ENCODE measurements at regions of chr17 and their contacts with region 1.

Region 1: DNA sequence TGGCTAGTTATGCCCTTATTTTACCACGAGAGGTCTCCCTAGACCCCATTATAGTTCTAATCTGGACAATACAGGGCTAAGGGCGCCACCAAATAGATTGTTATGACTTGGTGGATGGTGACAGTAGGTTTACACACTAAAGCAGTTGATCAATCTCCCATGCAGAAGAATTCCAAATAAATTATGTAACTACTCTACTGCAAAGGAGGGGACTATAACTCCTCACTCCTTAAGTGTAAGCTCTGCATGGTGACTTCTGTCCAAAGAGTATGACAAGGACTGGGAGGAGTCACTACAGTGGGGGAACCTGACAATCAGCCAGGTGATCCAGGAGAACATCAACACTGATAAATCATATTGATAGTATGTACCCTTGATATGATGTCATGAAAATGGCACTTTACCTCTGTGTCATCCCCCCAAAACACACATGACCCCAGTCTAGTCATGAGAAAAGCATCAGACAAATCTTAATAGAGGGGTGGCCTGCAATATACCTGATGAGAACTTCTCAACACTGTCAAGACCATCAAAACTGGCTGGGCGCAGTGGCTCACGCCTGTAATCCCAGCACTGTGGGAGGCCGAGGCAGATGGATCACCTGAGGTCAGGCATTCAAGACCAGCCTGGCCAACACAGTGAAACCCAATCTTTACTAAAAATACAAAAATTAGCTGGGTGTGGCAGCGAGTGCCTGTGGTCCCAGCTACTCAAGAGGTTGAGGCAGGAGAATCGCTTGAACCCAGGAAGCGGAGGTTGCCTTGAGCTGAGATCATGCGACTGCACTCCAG is 20.1 kb upstream of the YPEL2 start:
- DNase-seq: peak in 2 of 10 donors; percentile 13 to 37

Region 2: GRCh38 chr17:59558977-59559376 is 247.7 kb after region 1 on chr17:
- intact Hi-C with region 1: loop called (anchors 2 kb)
- DNase-seq: no peak

Measured in posterior cingulate gyrus (tissue), 11 donors.